Activated T-helper 1 cell treated with anti-CD3 and anti-CD28 coated beads, Interleukin-12 subunit alpha, Interleukin-12 subunit beta, Interleukin-2, Interleukin-4 antibody, amounts not matched to agents 30 ng/mL and 10 ng/mL and 1 ng/mL, durations not matched to agents 14 hours and 24 hours and 36 hours (primary cell): ENCODE measurements at regions of chrX and their contacts with region 1.

Region 1: GRCh38 chrX:49915361-49916222 is 6.8 kb upstream of the CLCN5 start:
- DNase-seq: peak; percentile 12
- H3K4me3 Mint-ChIP-seq: no peak overlapping the region
- H3K27ac Mint-ChIP-seq: no peak overlapping the region
- H3K4me1 Mint-ChIP-seq: peaks cover under 1% of the 10 kb centered on the region
- H3K27me3 Mint-ChIP-seq: peaks cover 2% of the 10 kb centered on the region

Region 2: GRCh38 chrX:49725923-49726904 is 189.4 kb before region 1 on chrX:
- intact Hi-C with region 1: no loop called
- DNase-seq: no peak
- H3K4me3 Mint-ChIP-seq: no peak overlapping the region
- H3K27ac Mint-ChIP-seq: no peak overlapping the region
- H3K4me1 Mint-ChIP-seq: no peaks in the 10 kb centered on the region
- H3K27me3 Mint-ChIP-seq: peaks cover 1% of the 10 kb centered on the region

Region 3: GRCh38 chrX:49930039-49930438 is 14.4 kb after region 1 on chrX:
- intact Hi-C with region 1: no loop called
- DNase-seq: no peak
- H3K4me3 Mint-ChIP-seq: no peak overlapping the region
- H3K27ac Mint-ChIP-seq: no peak overlapping the region
- H3K4me1 Mint-ChIP-seq: no peaks in the 10 kb centered on the region
- H3K27me3 Mint-ChIP-seq: no peaks in the 10 kb centered on the region

Region 4: GRCh38 chrX:50081282-50081889 is 165.8 kb after region 1 on chrX:
- intact Hi-C with region 1: loop called (anchors 1 kb)
- DNase-seq: no peak
- H3K4me3 Mint-ChIP-seq: no peak overlapping the region
- H3K27ac Mint-ChIP-seq: no peak overlapping the region
- H3K4me1 Mint-ChIP-seq: no peaks in the 10 kb centered on the region
- H3K27me3 Mint-ChIP-seq: no peaks in the 10 kb centered on the region

Region 5: GRCh38 chrX:50180073-50180940 is 264.7 kb after region 1 on chrX:
- intact Hi-C with region 1: no loop called
- DNase-seq: no peak
- H3K4me3 Mint-ChIP-seq: no peak overlapping the region
- H3K27ac Mint-ChIP-seq: no peak overlapping the region
- H3K4me1 Mint-ChIP-seq: no peaks in the 10 kb centered on the region
- H3K27me3 Mint-ChIP-seq: no peaks in the 10 kb centered on the region

Region 6: GRCh38 chrX:50579955-50580354 is 664.4 kb after region 1 on chrX:
- intact Hi-C with region 1: loop called (anchors 1 kb)
- DNase-seq: no peak
- H3K4me3 Mint-ChIP-seq: no peak overlapping the region
- H3K27ac Mint-ChIP-seq: no peak overlapping the region
- H3K4me1 Mint-ChIP-seq: no peaks in the 10 kb centered on the region
- H3K27me3 Mint-ChIP-seq: peaks cover 2% of the 10 kb centered on the region